ENCODE measurements at regions of chr6 and their contacts with region 1.

Region 1: DNA sequence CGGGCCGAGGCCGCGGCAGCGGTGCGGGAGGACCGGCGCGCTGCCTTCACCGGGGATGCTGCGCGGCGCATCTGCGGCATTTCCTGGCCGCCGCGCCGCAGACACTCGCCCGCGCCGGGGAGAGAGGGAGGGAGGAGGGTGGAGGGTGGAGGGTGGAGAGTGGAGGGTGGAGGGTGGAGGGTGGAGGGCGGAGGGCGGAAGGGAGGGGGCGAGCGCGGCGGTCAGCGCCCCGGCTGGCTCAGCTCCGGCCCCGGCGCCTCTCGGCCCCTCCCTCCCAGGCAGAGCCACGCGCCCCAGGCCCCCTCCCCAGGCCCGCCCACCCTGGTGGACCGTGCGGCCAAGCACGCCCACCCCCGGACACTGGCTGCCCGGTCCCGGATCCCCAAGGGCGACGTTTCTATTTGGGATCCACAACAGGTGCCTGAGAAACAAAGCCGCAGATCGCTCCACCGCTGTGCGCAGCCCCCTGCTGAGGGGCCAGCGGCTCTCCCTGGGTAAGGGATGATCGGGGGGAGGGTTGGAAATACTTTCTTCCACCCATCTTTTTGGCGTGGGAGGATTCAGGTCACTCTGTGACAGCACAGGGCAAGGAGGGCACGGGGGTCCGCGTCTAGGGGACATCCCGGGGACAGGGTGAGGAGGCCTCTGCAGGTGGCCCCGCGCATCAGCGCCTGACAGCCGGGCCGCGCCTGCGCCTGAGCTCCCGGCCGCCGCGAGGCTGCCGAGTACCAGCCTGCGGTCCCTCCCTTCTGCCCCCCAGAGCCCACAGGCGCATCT is 111.1 kb upstream of the BEND6 start:
- DNase-seq: peak; percentile 49
- H3K4me3 ChIP-seq: peak overlapping the region; percentile 60
- H3K27ac ChIP-seq: no peak overlapping the region
- H3K4me1 ChIP-seq: no peaks in the 10 kb centered on the region
- CTCF ChIP-seq: peak; percentile 55; the same call in 1 of the 2 replicates

Region 2: DNA sequence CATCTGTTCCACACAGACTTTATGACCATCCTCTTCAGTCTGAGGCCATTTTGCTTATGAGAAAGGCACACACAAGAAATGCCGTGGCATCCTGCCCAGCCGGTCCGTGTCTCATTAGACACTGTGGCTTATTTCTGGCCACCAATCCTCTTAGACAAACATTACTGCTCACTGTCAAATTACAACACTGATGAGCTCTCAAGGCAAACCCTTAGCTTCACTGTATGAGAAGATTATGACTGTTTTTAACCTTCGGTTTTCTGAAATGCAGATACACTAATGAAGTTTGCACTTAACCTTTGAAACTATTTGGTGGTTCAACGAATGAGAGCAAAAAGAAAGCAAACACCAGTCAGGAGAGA is 150.5 kb before region 1 on chr6:
- CTCF ChIA-PET with region 1: no interaction called
- POLR2A ChIA-PET with region 1: no interaction called
- intact Hi-C with region 1: no loop called
- DNase-seq: no peak
- H3K4me3 ChIP-seq: no peak overlapping the region
- H3K27ac ChIP-seq: no peak overlapping the region
- H3K4me1 ChIP-seq: no peaks in the 10 kb centered on the region
- CTCF ChIP-seq: no peak

Region 3: DNA sequence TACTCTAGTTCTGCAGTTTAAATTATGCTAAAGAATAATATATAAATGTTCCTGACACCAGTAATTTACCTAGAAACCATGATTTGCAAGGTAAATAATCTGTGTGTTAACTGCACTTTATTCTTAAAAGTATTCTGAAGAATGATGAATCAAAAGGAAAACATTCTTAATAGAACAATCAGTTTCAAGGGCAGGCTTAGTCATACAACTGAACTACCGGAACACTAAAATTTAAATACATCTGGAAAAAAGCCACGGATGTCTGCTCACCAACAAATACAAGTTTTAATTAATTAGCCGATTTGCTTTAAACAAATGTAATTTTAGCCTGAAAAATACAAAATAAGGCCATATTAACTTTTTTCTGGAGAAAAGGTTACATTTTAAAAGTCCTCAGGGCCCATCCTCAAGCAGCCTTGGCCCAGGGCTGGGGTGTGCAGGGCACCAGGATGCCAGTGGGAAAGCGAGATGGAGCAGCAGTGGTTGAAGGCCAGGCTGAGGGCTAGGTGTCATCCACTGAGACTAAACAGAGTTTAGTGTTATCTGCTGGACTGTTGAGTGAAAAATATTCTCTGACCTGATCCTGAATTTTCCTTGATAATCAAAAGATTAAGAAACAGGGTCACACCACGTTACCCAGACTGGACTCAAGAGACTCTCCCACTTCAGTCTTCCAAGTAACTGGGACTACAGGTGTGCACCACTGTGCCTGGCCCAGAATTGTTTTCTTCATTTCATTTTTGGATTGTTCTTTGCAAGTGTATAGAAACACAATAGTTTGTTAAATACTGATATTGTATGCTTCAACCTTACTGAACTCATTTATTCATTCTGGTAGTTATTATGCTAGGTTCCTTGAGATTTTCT is 112.9 kb before region 1 on chr6:
- CTCF ChIA-PET with region 1: no interaction called
- POLR2A ChIA-PET with region 1: no interaction called
- intact Hi-C with region 1: no loop called
- DNase-seq: no peak
- H3K4me3 ChIP-seq: no peak overlapping the region
- H3K27ac ChIP-seq: no peak overlapping the region
- H3K4me1 ChIP-seq: no peaks in the 10 kb centered on the region
- CTCF ChIP-seq: no peak

Region 4: GRCh38 chr6:56764081-56764566 is 79.6 kb before region 1 on chr6:
- CTCF ChIA-PET with region 1: no interaction called
- POLR2A ChIA-PET with region 1: interaction called, 5 read pairs
- intact Hi-C with region 1: loop called (anchors 10 kb)
- DNase-seq: no peak
- H3K4me3 ChIP-seq: no peak overlapping the region
- H3K27ac ChIP-seq: no peak overlapping the region
- H3K4me1 ChIP-seq: no peaks in the 10 kb centered on the region
- CTCF ChIP-seq: peak; percentile 33; the same call in 1 of the 2 replicates

Region 5: DNA sequence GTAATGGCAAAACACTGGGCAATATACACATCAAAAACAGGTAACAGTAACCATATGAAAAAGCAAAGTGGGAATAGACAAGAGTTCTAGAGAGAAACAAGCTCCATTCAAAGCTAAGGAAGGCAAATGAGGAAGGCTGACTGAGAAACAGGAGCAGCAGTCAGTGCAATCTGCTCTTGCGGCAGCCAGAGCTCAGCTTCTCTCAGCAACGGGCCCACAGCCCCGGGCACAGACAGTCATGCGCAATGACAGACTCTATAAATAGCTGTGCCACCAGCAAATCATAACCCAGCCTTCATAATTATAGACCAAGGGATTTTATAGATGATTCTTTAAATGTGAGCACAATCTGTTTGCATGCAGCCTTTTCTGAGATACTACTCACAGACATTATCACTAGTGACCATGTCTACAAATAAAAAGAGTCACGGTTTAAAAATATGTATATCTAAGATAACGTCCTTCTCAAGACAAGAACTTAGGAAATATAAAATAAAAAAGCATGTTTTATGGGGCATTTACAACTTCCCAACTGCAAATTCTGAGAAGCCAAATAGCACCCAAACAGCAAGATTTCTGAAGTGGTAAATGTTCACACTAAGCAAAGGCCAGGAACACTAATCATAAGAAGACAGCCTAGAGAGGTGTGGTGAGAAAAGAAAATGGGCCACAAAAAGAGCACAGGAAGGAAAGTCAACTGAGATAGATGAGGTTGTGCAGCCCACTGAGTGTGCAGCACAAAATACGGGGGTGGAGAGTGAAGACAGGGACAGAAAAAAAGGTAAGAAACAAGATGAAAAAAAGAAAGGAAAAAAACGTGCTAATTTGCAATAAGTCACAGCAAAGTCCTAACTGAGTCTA is 71.3 kb after region 1 on chr6:
- CTCF ChIA-PET with region 1: no interaction called
- POLR2A ChIA-PET with region 1: no interaction called
- intact Hi-C with region 1: no loop called
- DNase-seq: no peak
- H3K4me3 ChIP-seq: no peak overlapping the region
- H3K27ac ChIP-seq: no peak overlapping the region
- H3K4me1 ChIP-seq: no peaks in the 10 kb centered on the region
- CTCF ChIP-seq: no peak